ENCODE measurements at regions of chr11 and their contacts with region 1.

Region 1: GRCh38 chr11:46616998-46617675 is at the starts of genes ATG13 and HARBI1:
- DNase-seq: peak; percentile 82
- H3K4me3 Mint-ChIP-seq: peak within 1 kb of the TSS; percentile 82
- H3K27ac Mint-ChIP-seq: peak within 1 kb of the TSS; percentile 99
- H3K4me1 Mint-ChIP-seq: peaks cover 19% of the 10 kb centered on the region
- H3K27me3 Mint-ChIP-seq: no peaks in the 10 kb centered on the region
- CTCF ChIP-seq: no peak
- total RNA-seq, gene ATG13: 75.1 and 91.7 TPM in 2 replicates
- total RNA-seq, gene HARBI1: 6.8 and 8.5 TPM in 2 replicates

Region 2: DNA sequence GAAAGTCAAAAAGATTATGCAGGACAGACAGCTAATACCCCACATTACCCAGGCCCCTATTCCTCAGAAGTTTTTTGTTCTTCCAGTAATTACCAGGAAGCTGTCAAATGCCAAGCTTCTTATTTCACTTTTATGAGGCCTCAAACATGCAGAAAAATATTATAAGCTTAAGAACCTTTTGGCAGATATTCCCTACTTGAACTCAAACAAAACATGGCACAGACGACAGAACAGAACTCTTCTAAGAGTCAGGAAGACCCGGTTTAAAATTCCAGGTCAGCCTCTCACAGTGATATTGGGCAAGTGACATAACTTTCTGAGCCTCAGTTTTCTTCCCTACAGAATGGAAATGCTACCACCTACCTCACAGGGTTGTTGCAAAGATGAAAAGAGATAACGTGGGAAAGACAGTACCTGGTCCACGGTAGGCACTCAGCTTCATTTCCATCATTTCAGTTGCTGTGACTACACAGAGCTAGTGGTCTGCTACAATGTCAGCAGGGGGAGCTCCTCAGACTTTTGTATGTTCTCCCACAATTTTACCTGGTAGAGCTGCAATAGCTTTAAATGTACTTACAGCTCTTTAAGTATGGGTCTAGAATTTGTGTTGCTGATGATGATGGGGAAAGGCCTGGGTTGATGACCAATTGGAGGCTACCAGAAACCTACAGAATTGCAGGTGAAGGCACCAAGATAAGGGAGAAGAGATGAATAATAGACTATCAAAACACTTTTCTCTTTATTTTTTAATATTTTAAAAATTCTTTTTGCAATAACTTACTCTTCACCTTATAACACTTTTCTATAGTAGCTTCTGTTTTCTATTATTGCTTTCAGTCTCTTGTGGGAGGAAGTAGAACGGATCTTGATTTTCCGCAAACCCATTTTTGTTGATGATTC is 127.2 kb before region 1 on chr11:
- CTCF ChIA-PET with region 1: interaction called, 3 read pairs
- POLR2A ChIA-PET with region 1: no interaction called
- intact Hi-C with region 1: loop called (anchors 1 kb)
- DNase-seq: peak; percentile 60
- H3K4me3 Mint-ChIP-seq: no peak overlapping the region
- H3K27ac Mint-ChIP-seq: no peak overlapping the region
- H3K4me1 Mint-ChIP-seq: peaks cover 9% of the 10 kb centered on the region
- H3K27me3 Mint-ChIP-seq: no peaks in the 10 kb centered on the region
- CTCF ChIP-seq: peak; percentile 44

Region 3: DNA sequence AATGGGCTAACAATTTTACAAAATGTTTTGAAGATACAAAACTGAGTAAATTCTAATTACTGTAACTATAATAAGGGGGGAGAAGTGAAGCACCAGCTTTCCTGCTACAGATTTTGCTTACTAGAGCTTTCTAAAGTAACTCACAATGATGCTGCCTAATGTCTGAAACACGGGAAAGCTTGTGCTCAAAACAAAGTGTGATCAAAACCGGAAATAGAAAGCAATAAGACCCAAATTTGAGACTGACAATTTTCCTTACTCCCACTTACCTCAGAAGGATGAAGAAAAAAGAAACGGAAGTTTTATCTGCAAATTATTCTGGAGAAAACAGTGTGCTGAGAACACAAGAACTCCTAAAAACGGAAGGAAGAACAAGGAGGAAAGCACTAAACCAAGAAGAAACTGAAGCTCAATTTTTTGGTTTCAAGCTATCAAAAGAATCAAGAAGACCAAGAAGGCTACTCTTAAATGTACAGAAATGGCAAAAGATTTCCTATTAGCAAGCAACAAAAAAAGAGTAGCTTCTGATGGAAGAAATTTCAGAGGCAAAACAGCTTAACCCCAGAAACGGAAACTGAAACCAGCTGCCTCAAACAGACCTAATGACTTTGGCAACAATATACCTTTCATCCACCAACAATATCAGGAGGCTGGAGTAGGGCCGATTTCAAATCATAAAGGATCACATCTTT is 56.7 kb before region 1 on chr11:
- CTCF ChIA-PET with region 1: interaction called, 21 read pairs
- POLR2A ChIA-PET with region 1: interaction called, 108 read pairs
- intact Hi-C with region 1: loop called (anchors 2 kb)
- DNase-seq: peak; percentile 54
- H3K4me3 Mint-ChIP-seq: peak overlapping the region; percentile 76
- H3K27ac Mint-ChIP-seq: peak overlapping the region; percentile 94
- H3K4me1 Mint-ChIP-seq: peaks cover 39% of the 10 kb centered on the region
- H3K27me3 Mint-ChIP-seq: no peaks in the 10 kb centered on the region
- CTCF ChIP-seq: no peak

Region 4: GRCh38 chr11:46675288-46675851 is 58.2 kb after region 1 on chr11:
- CTCF ChIA-PET with region 1: no interaction called
- POLR2A ChIA-PET with region 1: interaction called, 17 read pairs
- intact Hi-C with region 1: no loop called
- DNase-seq: peak; percentile 71
- H3K4me3 Mint-ChIP-seq: no peak overlapping the region
- H3K27ac Mint-ChIP-seq: peak overlapping the region; percentile 97
- H3K4me1 Mint-ChIP-seq: peaks cover 14% of the 10 kb centered on the region
- H3K27me3 Mint-ChIP-seq: no peaks in the 10 kb centered on the region
- CTCF ChIP-seq: peak; percentile 10

Region 5: DNA sequence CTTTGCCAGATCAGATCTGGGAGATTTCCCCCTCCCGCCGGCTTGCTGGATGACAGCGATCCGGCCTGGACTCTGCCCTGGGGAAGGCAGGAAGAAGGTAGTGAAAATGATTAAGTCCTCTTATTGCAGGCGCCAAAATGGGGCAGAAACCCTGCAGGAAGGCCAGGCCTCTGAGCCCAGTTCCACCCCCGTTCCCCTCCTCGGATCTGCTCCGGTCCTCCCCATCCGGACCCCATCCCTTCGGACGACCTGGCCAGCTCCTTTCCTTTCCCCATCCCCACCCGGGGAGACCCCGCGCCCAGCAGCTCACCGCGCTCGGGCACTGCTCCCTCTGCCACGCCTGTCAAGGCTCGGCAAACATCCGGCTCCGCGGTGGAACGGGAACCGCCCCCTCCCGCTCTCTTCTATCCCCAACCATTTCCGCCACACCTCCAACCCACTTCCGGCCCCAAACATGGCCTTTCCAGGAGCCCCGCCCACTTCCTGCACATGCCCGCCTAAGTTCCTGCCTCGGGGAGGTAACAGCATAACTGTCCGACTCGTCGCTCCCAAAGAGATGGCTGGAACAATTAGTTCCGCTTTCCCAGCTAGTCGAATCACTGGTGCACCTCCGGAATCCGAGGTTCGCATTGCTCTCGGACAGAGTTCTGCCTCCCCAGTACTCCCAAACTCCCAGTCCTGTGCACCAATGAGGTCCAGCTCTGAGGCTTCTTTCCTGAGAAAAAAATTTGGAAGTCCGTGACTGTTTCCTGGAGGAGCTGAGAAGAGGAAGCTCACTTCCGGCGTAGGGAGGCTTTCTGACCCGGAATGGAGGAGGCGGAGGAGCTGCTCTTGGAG is 83.3 kb after region 1 on chr11 and contains the starts of genes ARHGAP1 and ZNF408:
- CTCF ChIA-PET with region 1: interaction called, 3 read pairs
- POLR2A ChIA-PET with region 1: interaction called, 28 read pairs
- intact Hi-C with region 1: no loop called
- DNase-seq: peak; percentile 98
- H3K4me3 Mint-ChIP-seq: peak within 1 kb of the TSS; percentile 99
- H3K27ac Mint-ChIP-seq: peak within 1 kb of the TSS; percentile 98
- H3K4me1 Mint-ChIP-seq: peaks cover 21% of the 10 kb centered on the region
- H3K27me3 Mint-ChIP-seq: no peaks in the 10 kb centered on the region
- CTCF ChIP-seq: no peak
- total RNA-seq, gene ARHGAP1: 61.0 and 63.6 TPM in 2 replicates
- total RNA-seq, gene ZNF408: 14.5 and 15.3 TPM in 2 replicates

Region 6: GRCh38 chr11:46718155-46719019 is 101.2 kb after region 1 on chr11:
- CTCF ChIA-PET with region 1: no interaction called
- POLR2A ChIA-PET with region 1: no interaction called
- intact Hi-C with region 1: no loop called
- DNase-seq: no peak
- H3K4me3 Mint-ChIP-seq: no peak overlapping the region
- H3K27ac Mint-ChIP-seq: no peak overlapping the region
- H3K4me1 Mint-ChIP-seq: no peaks in the 10 kb centered on the region
- H3K27me3 Mint-ChIP-seq: no peaks in the 10 kb centered on the region
- CTCF ChIP-seq: no peak

Region 7: GRCh38 chr11:46886215-46886614 is 269.1 kb after region 1 on chr11:
- CTCF ChIA-PET with region 1: no interaction called
- POLR2A ChIA-PET with region 1: no interaction called
- intact Hi-C with region 1: no loop called
- DNase-seq: no peak
- H3K4me3 Mint-ChIP-seq: no peak overlapping the region
- H3K27ac Mint-ChIP-seq: no peak overlapping the region
- H3K4me1 Mint-ChIP-seq: no peaks in the 10 kb centered on the region
- H3K27me3 Mint-ChIP-seq: no peaks in the 10 kb centered on the region
- CTCF ChIP-seq: no peak

Region 8: GRCh38 chr11:47130543-47130942 is 513.4 kb after region 1 on chr11:
- CTCF ChIA-PET with region 1: no interaction called
- POLR2A ChIA-PET with region 1: no interaction called
- intact Hi-C with region 1: no loop called
- DNase-seq: no peak
- H3K4me3 Mint-ChIP-seq: no peak overlapping the region
- H3K27ac Mint-ChIP-seq: no peak overlapping the region
- H3K4me1 Mint-ChIP-seq: no peaks in the 10 kb centered on the region
- H3K27me3 Mint-ChIP-seq: no peaks in the 10 kb centered on the region
- CTCF ChIP-seq: no peak

Measured in MCF 10A (cell line).